Dendritic cell treated with granulocyte-macrophage colony-stimulating factor and Interleukin-4, amounts not matched to agents 40 ng/mL and 50 ng/mL, for 4 days (primary cell): ENCODE measurements at regions of chr2 and their contacts with region 1.

Region 1: DNA sequence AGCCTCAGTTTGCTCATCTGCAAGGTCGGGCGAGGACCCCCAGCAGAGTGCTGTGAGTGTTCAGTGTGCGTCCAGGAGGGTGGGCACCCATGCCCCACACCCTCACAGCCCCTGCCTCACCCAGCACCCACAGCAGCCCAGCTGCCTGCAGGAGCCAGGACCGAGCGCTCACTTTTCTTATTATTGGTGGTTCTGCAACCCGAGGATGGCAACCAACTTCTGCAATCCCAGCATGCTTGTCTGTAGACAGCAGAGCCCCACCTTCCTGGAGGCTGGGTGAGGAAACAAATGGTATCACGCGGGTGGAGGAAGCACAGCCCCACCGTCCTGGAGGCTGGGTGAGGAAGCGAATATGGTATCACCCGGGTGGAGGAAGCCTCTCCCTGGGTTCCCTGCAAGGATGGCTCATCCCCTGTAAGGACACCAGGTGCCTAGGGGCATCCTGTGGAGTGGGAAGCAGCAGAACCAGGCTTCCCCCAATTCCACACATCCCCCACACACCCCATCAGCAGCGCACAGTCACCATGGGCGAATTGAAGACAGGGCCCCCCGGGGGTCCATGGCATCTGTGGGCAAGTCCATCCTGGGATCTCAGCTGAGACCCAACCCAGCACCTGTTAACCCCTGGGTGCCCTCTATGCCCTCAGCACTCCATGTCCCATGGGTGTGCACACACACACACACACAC is 220.5 kb upstream of the RAB6C start:
- H3K4me3 Mint-ChIP-seq: peak overlapping the region; percentile 62
- H3K27ac Mint-ChIP-seq: no peak overlapping the region
- H3K4me1 Mint-ChIP-seq: no peaks in the 10 kb centered on the region
- H3K27me3 Mint-ChIP-seq: peaks cover 6% of the 10 kb centered on the region

Region 2: GRCh38 chr2:129812071-129812470 is 53.1 kb after region 1 on chr2:
- intact Hi-C with region 1: loop called (anchors 1 kb)
- H3K4me3 Mint-ChIP-seq: no peak overlapping the region
- H3K27ac Mint-ChIP-seq: peak overlapping the region; percentile 65
- H3K4me1 Mint-ChIP-seq: peaks cover 50% of the 10 kb centered on the region
- H3K27me3 Mint-ChIP-seq: peaks cover 64% of the 10 kb centered on the region